GM10248 (cell line): ENCODE measurements at regions of chr14 and their contacts with region 1.

Region 1: DNA sequence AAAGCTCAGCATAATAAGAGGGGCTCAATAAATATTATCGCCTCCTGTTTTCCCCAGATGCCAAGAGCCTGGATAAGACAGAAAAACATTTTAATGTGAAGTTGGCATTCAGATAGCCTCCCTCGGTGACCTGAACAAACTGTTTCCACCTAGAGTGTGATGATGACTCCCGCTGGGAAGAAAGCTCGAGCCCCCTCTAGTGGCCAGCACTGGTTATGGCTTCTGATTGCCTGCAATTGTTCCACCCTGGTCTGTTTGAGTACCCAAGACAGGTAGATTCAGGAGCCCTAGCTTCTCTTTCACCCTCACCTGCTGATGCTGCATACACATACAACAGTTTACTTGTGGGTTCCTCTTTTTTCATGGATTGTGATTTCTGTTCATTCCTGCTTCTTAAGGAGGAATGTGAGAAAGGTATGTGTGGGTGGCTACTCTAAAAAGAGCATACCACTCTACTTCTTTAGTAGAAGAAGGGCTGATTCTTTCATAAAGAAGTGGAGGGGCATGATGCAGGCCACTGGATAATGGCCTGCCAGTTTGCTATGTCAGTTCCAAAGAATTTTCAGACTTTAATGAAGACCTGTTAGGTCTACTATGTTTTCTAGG is 6.4 kb downstream of the ERG28 start:
- DNase-seq: peak; percentile 80
- CTCF ChIP-seq: peak; percentile 93

Region 2: GRCh38 chr14:75554487-75554886 is 99.7 kb before region 1 on chr14:
- CTCF ChIA-PET with region 1: interaction called, 14 read pairs
- POLR2A ChIA-PET with region 1: no interaction called
- DNase-seq: no peak
- CTCF ChIP-seq: no peak

Region 3: GRCh38 chr14:75604856-75605851 is 49.1 kb before region 1 on chr14:
- CTCF ChIA-PET with region 1: interaction called, 12 read pairs
- POLR2A ChIA-PET with region 1: no interaction called
- DNase-seq: no peak
- CTCF ChIP-seq: no peak

Region 4: DNA sequence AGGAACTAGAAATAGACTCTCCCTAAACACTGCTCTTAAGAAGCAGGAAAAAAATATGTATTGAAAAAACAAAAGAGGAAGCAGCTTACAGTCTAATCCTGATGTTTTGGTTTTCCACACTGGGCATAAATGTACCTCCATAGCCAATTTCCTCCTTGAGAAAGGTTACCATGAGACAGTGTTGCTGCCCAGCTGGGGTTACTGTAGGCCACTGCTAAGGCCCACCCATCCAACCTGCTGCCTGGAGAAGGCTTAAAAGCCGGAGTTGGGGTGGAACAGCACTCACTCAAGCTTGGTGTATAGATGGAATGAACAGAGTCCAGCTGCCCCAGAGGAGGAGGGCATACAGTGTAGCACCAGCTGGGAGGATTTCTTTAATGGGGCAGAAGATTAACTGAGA is 34.7 kb before region 1 on chr14:
- CTCF ChIA-PET with region 1: interaction called, 16 read pairs
- POLR2A ChIA-PET with region 1: no interaction called
- DNase-seq: no peak
- CTCF ChIP-seq: no peak

Region 5: GRCh38 chr14:75636100-75636692 is 18.0 kb before region 1 on chr14:
- CTCF ChIA-PET with region 1: interaction called, 37 read pairs
- POLR2A ChIA-PET with region 1: no interaction called
- DNase-seq: no peak
- CTCF ChIP-seq: no peak

Region 6: DNA sequence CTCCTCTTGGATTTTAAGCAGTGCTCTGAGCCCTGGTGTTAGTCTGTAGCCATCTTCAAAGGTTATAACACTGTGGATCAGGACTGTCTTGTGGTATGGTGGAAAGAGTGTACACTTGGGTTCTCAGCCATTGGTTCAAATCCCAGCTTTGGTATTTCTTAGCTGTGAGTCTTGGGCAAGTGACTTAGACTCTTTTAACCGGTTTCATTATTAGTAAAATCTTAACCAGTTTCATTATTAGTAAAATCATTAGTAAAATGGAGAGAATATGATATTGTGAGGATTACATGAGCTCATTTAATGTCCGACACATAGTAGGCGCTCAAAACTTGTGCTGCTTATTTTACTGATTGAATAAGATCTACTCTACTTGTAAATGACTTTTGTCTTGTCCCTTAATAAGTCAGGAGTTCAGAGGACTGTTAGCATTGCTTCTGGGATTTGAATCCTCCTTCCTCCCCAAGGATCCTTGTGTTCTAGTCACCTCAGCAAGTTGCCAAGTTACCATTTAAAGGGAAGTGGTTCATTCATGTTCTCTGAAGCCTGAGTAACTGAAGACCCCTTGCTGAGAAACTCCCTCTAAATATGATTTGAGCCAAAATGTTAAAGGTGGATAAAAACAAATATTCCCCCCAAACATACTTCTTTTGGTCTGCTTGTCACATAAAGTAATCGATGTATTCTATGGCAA is 19.3 kb after region 1 on chr14:
- CTCF ChIA-PET with region 1: interaction called, 13 read pairs
- POLR2A ChIA-PET with region 1: no interaction called
- DNase-seq: peak; percentile 31
- CTCF ChIP-seq: no peak

Region 7: GRCh38 chr14:75738192-75738591 is 84.0 kb after region 1 on chr14:
- CTCF ChIA-PET with region 1: no interaction called
- POLR2A ChIA-PET with region 1: no interaction called
- DNase-seq: no peak
- CTCF ChIP-seq: no peak